B cell (primary cell): ENCODE measurements at regions of chr10 and their contacts with region 1.

Region 1: GRCh38 chr10:86399879-86400704 is 33.5 kb upstream of the GRID1 start:
- DNase-seq: peak; percentile 92
- ATAC-seq: peak; percentile 88
- H3K4me3 ChIP-seq: peak overlapping the region in 4 of 5 experiments; percentile 61 to 77 (median 63)
- H3K4me3 Mint-ChIP-seq: peak overlapping the region; percentile 93
- H3K27ac ChIP-seq: peak overlapping the region; percentile 15 to 61
- H3K27ac Mint-ChIP-seq: peak overlapping the region; percentile 61
- H3K4me1 ChIP-seq: peaks cover 13 to 20% of the 10 kb centered on the region in 2 donors
- H3K4me1 Mint-ChIP-seq: peaks cover 15% of the 10 kb centered on the region
- H3K27me3 ChIP-seq: peaks cover 0 to 7% (median 4%) of the 10 kb centered on the region in 4 experiments
- H3K27me3 Mint-ChIP-seq: peaks cover 16% of the 10 kb centered on the region
- CTCF ChIP-seq: peak; percentile 98

Region 2: DNA sequence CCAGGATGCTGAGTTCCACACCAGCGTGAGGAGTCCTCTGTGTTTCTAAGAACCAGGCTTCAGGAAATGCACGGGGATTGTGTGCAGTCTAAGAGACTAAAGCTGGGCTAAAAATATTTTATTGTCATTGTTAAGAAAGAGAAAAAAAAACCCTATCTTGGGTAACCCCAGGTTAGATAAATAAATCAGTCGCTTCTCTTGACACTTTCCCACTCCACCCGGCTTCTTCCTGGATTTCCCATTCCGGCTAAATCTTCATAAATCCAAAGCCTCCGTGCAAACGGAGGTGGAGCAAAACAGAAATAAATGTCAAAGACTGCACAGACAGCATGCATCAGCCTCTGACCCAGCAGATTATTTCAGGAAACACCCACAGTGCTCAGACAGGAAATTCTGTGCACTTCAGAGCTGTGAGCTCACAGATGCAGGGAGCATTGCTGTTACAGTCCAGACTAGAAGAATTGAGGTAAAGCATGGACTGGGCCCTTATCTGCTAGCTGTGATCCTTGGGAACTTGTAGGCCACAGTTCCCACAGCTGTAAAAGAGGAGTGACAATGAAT is 11.3 kb after region 1 on chr10:
- CTCF ChIA-PET with region 1: interaction called, 50 read pairs
- POLR2A ChIA-PET with region 1: interaction called, 13 read pairs
- intact Hi-C with region 1: loop called (anchors 1 kb)
- DNase-seq: peak; percentile 40
- ATAC-seq: no peak
- H3K4me3 ChIP-seq: peak overlapping the region in 2 of 5 experiments; percentile 10 to 35
- H3K4me3 Mint-ChIP-seq: peak overlapping the region; percentile 46
- H3K27ac ChIP-seq: no peak overlapping the region
- H3K27ac Mint-ChIP-seq: peak overlapping the region; percentile 71
- H3K4me1 ChIP-seq: peaks cover 38 to 45% of the 10 kb centered on the region in 2 donors
- H3K4me1 Mint-ChIP-seq: peaks cover 45% of the 10 kb centered on the region
- H3K27me3 ChIP-seq: no peaks in the 10 kb centered on the region
- H3K27me3 Mint-ChIP-seq: peaks cover 4% of the 10 kb centered on the region
- CTCF ChIP-seq: no peak

Region 3: GRCh38 chr10:86585037-86585725 is 185.1 kb after region 1 on chr10:
- CTCF ChIA-PET with region 1: interaction called, 156 read pairs
- POLR2A ChIA-PET with region 1: no interaction called
- intact Hi-C with region 1: loop called (anchors 1 kb)
- DNase-seq: peak; percentile 81
- ATAC-seq: peak; percentile 97
- H3K4me3 ChIP-seq: no peak overlapping the region
- H3K4me3 Mint-ChIP-seq: no peak overlapping the region
- H3K27ac ChIP-seq: no peak overlapping the region
- H3K27ac Mint-ChIP-seq: no peak overlapping the region
- H3K4me1 ChIP-seq: peaks cover 3 to 5% of the 10 kb centered on the region in 2 donors
- H3K4me1 Mint-ChIP-seq: peaks cover 2% of the 10 kb centered on the region
- H3K27me3 ChIP-seq: peaks cover 0 to 12% (median 0%) of the 10 kb centered on the region in 4 experiments
- H3K27me3 Mint-ChIP-seq: peaks cover 15% of the 10 kb centered on the region
- CTCF ChIP-seq: peak; percentile 97

Region 4: DNA sequence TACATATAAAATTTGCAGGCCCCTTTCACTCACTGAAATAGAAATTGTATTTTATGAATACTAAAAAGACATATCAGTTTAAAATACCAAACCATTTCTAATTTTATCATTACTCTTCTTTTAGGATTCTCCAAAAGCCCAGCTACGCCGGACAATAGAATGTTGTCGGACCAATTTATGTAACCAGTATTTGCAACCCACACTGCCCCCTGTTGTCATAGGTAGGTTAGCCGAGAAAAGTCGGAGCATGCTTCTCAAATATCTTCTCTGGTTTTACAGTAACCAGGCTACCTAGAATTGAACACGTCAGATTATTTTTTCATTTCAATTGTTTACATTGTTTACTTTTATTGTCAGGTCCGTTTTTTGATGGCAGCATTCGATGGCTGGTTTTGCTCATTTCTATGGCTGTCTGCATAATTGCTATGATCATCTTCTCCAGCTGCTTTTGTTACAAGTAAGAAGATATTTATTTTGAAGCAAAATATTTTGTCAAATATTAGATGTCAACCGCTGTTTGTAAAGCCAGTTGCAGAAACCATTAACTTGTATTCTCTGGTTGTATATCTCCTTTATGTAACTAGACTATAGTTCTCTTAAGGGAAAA is 499.7 kb after region 1 on chr10:
- CTCF ChIA-PET with region 1: interaction called, 7 read pairs
- POLR2A ChIA-PET with region 1: interaction called, 4 read pairs
- intact Hi-C with region 1: loop called (anchors 5 kb)
- DNase-seq: peak; percentile 59
- ATAC-seq: no peak
- H3K4me3 ChIP-seq: no peak overlapping the region
- H3K4me3 Mint-ChIP-seq: no peak overlapping the region
- H3K27ac ChIP-seq: no peak overlapping the region
- H3K27ac Mint-ChIP-seq: no peak overlapping the region
- H3K4me1 ChIP-seq: no peaks in the 10 kb centered on the region
- H3K4me1 Mint-ChIP-seq: no peaks in the 10 kb centered on the region
- H3K27me3 ChIP-seq: no peaks in the 10 kb centered on the region
- H3K27me3 Mint-ChIP-seq: no peaks in the 10 kb centered on the region
- CTCF ChIP-seq: peak; percentile 74